Calu3 (cell line): ENCODE measurements at regions of chr4 and their contacts with region 1.

Region 1: GRCh38 chr4:176150356-176150682 is 45.1 kb downstream of the SPATA4 start:
- DNase-seq: no peak
- H3K4me3 Mint-ChIP-seq: no peak overlapping the region
- H3K27ac Mint-ChIP-seq: no peak overlapping the region
- H3K4me1 Mint-ChIP-seq: no peaks in the 10 kb centered on the region
- H3K27me3 Mint-ChIP-seq: no peaks in the 10 kb centered on the region
- CTCF ChIP-seq: no peak

Region 2: GRCh38 chr4:176340871-176341685 is 190.8 kb after region 1 on chr4:
- CTCF ChIA-PET with region 1: interaction called, 6 read pairs
- intact Hi-C with region 1: loop called (anchors 1 kb)
- DNase-seq: peak; percentile 4
- H3K4me3 Mint-ChIP-seq: no peak overlapping the region
- H3K27ac Mint-ChIP-seq: no peak overlapping the region
- H3K4me1 Mint-ChIP-seq: no peaks in the 10 kb centered on the region
- H3K27me3 Mint-ChIP-seq: no peaks in the 10 kb centered on the region
- CTCF ChIP-seq: no peak